CD4-positive, alpha-beta memory T cell (primary cell): ENCODE measurements at regions of chr3 and their contacts with region 1.

Region 1: DNA sequence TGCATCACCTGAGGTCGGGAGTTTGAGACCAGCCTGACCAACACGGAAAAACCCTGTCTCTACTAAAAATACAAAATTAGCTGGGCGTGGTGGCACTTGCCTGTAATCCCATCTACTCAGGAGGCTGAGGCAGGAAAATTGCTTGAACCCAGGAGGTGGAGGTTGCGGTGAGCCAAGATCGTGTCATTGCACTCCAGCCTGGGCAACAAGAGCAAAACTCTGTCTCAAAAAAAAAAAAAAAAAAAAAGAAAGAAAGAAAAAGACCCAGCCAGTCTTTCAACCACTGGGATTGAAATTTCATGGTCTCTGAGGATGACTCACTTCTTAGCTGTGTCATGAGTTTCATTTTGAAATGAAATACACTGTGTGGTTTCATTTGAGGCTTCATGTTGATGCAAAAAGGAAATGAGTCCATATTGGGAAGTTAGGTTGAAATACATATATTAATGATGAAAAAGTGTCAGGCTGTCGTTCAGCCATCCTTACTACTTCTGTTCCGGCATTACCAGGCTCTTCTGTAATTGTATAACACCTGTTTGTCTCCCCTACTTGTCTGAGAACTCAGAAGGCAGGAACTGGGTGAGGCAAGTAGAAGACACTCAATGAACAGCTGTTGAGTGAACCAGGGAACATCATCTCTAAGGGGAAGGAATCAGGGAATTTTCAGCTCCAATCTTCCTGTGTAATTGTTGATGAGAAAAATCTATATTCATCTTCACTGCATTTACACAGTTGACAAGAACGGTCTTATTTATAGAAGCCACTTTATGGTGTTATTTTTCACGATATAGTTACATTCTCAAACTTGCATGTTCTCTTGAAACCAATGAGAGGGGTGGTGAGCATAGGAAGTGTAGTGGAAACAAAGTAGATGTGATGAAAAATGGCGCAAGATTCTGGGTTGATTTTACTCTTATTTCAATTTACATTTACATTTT is 87.4 kb downstream of the NFKBIZ start:
- DNase-seq: peak; percentile 52 to 71 (median 65)
- H3K4me3 ChIP-seq: no peak overlapping the region
- H3K4me3 Mint-ChIP-seq: peak overlapping the region; percentile 61 to 87 (median 71)
- H3K27ac ChIP-seq: no peak overlapping the region
- H3K27ac Mint-ChIP-seq: peak overlapping the region; percentile 75 to 92 (median 86)
- H3K4me1 ChIP-seq: peaks cover 63% of the 10 kb centered on the region
- H3K4me1 Mint-ChIP-seq: peaks cover 18 to 26% (median 22%) of the 10 kb centered on the region in 4 donors
- H3K27me3 ChIP-seq: no peaks in the 10 kb centered on the region
- H3K27me3 Mint-ChIP-seq: no peaks in the 10 kb centered on the region

Region 2: DNA sequence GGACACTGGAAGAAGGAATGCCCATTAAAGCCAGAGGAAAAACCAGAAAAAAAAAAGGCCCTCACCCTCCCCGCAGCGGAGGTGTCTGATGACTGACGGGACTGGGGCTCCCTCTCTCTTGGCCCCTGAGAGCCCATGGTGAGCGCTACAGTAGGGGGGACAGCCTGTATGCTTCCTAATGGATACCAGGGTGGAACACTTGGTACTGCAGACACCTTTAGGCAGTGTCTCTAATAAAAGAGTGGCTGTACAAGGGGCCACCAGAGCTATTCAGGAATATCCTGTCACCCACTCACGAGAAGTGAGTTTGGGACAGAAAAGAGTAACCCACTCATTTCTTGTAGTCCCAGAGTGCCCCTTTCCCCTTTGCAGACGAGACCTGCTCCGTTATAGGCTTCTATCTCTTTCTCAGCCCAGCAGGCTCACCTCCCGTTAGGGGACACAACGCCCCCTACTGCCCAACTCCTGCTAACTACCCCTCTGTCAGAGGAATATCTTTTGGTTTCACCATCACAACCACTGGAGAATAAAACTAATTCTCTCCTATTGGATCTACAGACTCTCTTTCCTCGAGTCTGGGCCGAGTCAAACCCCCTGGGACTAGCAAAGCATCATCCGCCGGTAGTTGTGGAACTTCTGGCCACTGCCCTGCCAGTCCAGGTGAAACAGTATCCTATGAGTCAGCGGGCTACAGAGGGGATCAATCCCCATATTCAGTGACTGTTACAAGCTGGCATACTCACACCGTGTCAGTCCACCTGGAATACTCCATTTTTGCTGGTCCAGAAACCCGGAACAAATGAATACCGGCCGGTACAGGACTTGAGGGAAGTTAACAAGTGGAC is 300.5 kb before region 1 on chr3:
- CTCF ChIA-PET with region 1: no interaction called
- POLR2A ChIA-PET with region 1: no interaction called
- intact Hi-C with region 1: no loop called
- DNase-seq: peak; percentile 60 to 63 (median 61)
- H3K4me3 ChIP-seq: no peak overlapping the region
- H3K4me3 Mint-ChIP-seq: no peak overlapping the region
- H3K27ac ChIP-seq: no peak overlapping the region
- H3K27ac Mint-ChIP-seq: peak overlapping the region in 2 of 7 donors; percentile 6 to 8
- H3K4me1 ChIP-seq: no peaks in the 10 kb centered on the region
- H3K4me1 Mint-ChIP-seq: peaks cover 0 to 5% (median 4%) of the 10 kb centered on the region in 4 donors
- H3K27me3 ChIP-seq: no peaks in the 10 kb centered on the region
- H3K27me3 Mint-ChIP-seq: no peaks in the 10 kb centered on the region

Region 3: GRCh38 chr3:101709126-101709525 is 227.6 kb before region 1 on chr3:
- CTCF ChIA-PET with region 1: no interaction called
- POLR2A ChIA-PET with region 1: no interaction called
- intact Hi-C with region 1: no loop called
- DNase-seq: no peak
- H3K4me3 ChIP-seq: no peak overlapping the region
- H3K4me3 Mint-ChIP-seq: no peak overlapping the region
- H3K27ac ChIP-seq: no peak overlapping the region
- H3K27ac Mint-ChIP-seq: no peak overlapping the region
- H3K4me1 ChIP-seq: no peaks in the 10 kb centered on the region
- H3K4me1 Mint-ChIP-seq: no peaks in the 10 kb centered on the region
- H3K27me3 ChIP-seq: no peaks in the 10 kb centered on the region
- H3K27me3 Mint-ChIP-seq: no peaks in the 10 kb centered on the region

Region 4: GRCh38 chr3:102057781-102058421 is 121.2 kb after region 1 on chr3:
- CTCF ChIA-PET with region 1: no interaction called
- POLR2A ChIA-PET with region 1: interaction called, 6 read pairs
- intact Hi-C with region 1: loop called (anchors 5 kb)
- DNase-seq: peak; percentile 64 to 80 (median 71)
- H3K4me3 ChIP-seq: no peak overlapping the region
- H3K4me3 Mint-ChIP-seq: peak overlapping the region in 7 of 8 donors; percentile 21 to 71 (median 48)
- H3K27ac ChIP-seq: peak overlapping the region; percentile 10
- H3K27ac Mint-ChIP-seq: peak overlapping the region; percentile 15 to 88 (median 44)
- H3K4me1 ChIP-seq: peaks cover 39% of the 10 kb centered on the region
- H3K4me1 Mint-ChIP-seq: peaks cover 28 to 35% (median 31%) of the 10 kb centered on the region in 4 donors
- H3K27me3 ChIP-seq: no peaks in the 10 kb centered on the region
- H3K27me3 Mint-ChIP-seq: no peaks in the 10 kb centered on the region